BJ (cell line): ENCODE measurements at regions of chr6 and their contacts with region 1.

Region 1: GRCh38 chr6:20301256-20301655 is 89.0 kb upstream of the MBOAT1 start:
- DNase-seq: no peak
- H3K4me3 ChIP-seq: no peak overlapping the region
- H3K27me3 ChIP-seq: no peaks in the 10 kb centered on the region
- CTCF ChIP-seq: no peak

Region 2: GRCh38 chr6:20438462-20439070 is 137.3 kb after region 1 on chr6:
- CTCF ChIA-PET with region 1: no interaction called
- POLR2A ChIA-PET with region 1: no interaction called
- DNase-seq: no peak
- H3K4me3 ChIP-seq: no peak overlapping the region
- H3K27me3 ChIP-seq: no peaks in the 10 kb centered on the region
- CTCF ChIP-seq: no peak

Region 3: GRCh38 chr6:20509212-20509611 is 208.0 kb after region 1 on chr6:
- CTCF ChIA-PET with region 1: no interaction called
- POLR2A ChIA-PET with region 1: interaction called, 11 read pairs
- DNase-seq: no peak
- H3K4me3 ChIP-seq: no peak overlapping the region
- H3K27me3 ChIP-seq: peaks cover 1% of the 10 kb centered on the region; the same call in 1 of the 2 replicates
- CTCF ChIP-seq: no peak

Region 4: GRCh38 chr6:20652299-20653084 is 351.2 kb after region 1 on chr6:
- CTCF ChIA-PET with region 1: no interaction called
- POLR2A ChIA-PET with region 1: no interaction called
- DNase-seq: peak; percentile 9
- H3K4me3 ChIP-seq: no peak overlapping the region
- H3K27me3 ChIP-seq: no peaks in the 10 kb centered on the region
- CTCF ChIP-seq: no peak